ENCODE measurements at regions of chr22 and their contacts with region 1.

Region 1: GRCh38 chr22:30485362-30485988 is 13.7 kb upstream of the SEC14L3 start:
- DNase-seq: peak; percentile 44 to 92
- H3K4me3 ChIP-seq: no peak overlapping the region
- H3K27ac ChIP-seq: no peak overlapping the region
- H3K4me1 ChIP-seq: no peaks in the 10 kb centered on the region; a peak in 1 of 7 replicates
- H3K27me3 ChIP-seq: no peaks in the 10 kb centered on the region
- CTCF ChIP-seq: peak; percentile 93 to 95 (median 93)
- EP300 ChIP-seq: no peak
- POLR2A ChIP-seq: no peak
- RAD21 ChIP-seq: peak; percentile 85 to 89

Region 2: DNA sequence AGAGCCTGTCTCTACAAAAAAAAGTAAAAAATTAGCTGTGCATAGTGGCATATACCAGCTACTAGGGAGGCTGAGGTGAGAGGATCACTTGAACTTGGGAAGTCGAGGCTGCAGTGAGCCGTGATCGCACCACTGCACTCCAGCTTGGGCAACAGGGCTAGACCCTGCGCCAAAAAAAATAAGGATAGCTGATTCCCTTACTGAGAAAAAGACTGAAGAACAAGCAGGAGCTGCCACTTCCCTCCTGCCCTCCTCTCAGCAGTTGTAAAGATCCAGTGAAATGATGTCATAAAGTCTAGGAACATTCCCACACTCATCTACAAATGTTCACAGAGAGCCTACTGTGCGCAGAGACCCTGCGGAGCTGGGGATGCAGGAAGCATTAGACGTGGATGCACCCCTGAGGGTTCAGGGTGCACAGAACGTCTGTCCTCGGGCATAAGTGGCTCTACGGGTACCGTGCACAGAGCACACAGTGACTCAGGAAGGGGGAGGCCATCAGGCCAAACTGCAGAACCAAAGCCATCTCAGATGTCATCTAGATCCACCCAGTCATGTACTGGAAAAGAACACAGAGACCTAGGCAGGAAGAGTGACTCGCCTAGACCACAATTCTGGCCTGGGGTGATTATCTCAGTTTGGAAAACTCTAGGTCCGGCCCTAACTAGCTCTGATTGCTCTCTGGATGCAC is 76.9 kb before region 1 on chr22:
- CTCF ChIA-PET with region 1: no interaction called
- POLR2A ChIA-PET with region 1: no interaction called
- DNase-seq: no peak
- H3K4me3 ChIP-seq: no peak overlapping the region
- H3K27ac ChIP-seq: no peak overlapping the region
- H3K4me1 ChIP-seq: no peaks in the 10 kb centered on the region
- H3K27me3 ChIP-seq: no peaks in the 10 kb centered on the region
- CTCF ChIP-seq: no peak
- EP300 ChIP-seq: no peak
- POLR2A ChIP-seq: no peak
- RAD21 ChIP-seq: no peak

Region 3: DNA sequence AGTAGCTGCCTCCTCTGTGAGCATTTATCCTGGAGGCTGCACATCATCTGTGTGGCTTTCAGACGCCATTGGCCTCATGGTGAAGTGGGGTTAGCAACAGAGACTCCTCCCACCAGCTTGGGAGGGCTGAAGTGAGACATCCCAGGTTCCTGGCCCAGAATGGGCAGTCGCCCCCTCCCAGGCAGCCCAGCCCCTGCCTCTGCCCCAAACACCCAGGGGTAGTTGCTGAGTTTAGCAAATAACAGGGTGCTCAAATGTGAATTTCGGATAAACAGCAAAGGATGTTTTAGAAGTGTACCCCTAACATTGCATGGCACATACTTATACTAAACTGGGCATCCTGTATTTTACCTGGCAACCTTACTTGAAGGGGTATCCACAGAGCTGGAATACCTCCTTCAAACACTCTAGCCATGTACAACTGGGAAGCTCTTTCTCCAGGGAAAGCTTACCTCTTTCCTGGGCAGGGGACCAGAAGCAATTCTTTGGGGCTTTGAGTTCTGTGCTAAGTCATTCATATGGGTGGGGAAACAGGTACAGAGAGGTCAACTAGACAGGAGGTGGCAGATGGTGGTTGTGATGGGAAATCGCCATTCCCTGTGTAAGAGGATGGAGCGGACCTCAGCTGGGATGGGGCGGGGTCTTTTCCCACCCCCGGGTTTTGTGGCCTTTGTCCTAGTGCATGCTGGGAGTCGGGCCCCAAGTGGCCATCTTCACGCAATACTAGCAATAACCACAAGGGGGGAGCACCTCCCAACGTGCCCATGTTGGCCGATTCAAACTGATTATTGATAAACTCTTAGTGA is 40.6 kb before region 1 on chr22:
- CTCF ChIA-PET with region 1: interaction called, 69 read pairs
- POLR2A ChIA-PET with region 1: interaction called, 5 read pairs
- DNase-seq: peak; percentile 59 to 91
- H3K4me3 ChIP-seq: peak overlapping the region in 2 of 4 experiments; percentile 16 to 42; a peak in 4 of 8 replicates
- H3K27ac ChIP-seq: no peak overlapping the region
- H3K4me1 ChIP-seq: peaks cover 0 to 5% (median 5%) of the 10 kb centered on the region in 4 experiments; a peak in 6 of 7 replicates
- H3K27me3 ChIP-seq: no peaks in the 10 kb centered on the region
- CTCF ChIP-seq: peak; percentile 79 to 85 (median 82)
- EP300 ChIP-seq: no peak
- POLR2A ChIP-seq: no peak; a peak in 1 of 3 replicates
- RAD21 ChIP-seq: peak; percentile 83 to 87

Region 4: GRCh38 chr22:30459181-30460052 is 26.1 kb before region 1 on chr22:
- CTCF ChIA-PET with region 1: interaction called, 28 read pairs
- POLR2A ChIA-PET with region 1: interaction called, 3 read pairs
- DNase-seq: peak in 1 of 2 experiments; percentile 52
- H3K4me3 ChIP-seq: no peak overlapping the region
- H3K27ac ChIP-seq: no peak overlapping the region
- H3K4me1 ChIP-seq: no peaks in the 10 kb centered on the region
- H3K27me3 ChIP-seq: no peaks in the 10 kb centered on the region
- CTCF ChIP-seq: no peak
- EP300 ChIP-seq: no peak
- POLR2A ChIP-seq: no peak
- RAD21 ChIP-seq: no peak

Region 5: GRCh38 chr22:30469165-30469564 is 16.3 kb before region 1 on chr22:
- CTCF ChIA-PET with region 1: interaction called, 48 read pairs
- POLR2A ChIA-PET with region 1: interaction called, 5 read pairs
- DNase-seq: no peak
- H3K4me3 ChIP-seq: no peak overlapping the region
- H3K27ac ChIP-seq: no peak overlapping the region
- H3K4me1 ChIP-seq: no peaks in the 10 kb centered on the region; a peak in 1 of 7 replicates
- H3K27me3 ChIP-seq: peaks cover 0 to 2% (median 0%) of the 10 kb centered on the region in 4 experiments; a peak in 3 of 7 replicates
- CTCF ChIP-seq: no peak
- EP300 ChIP-seq: no peak
- POLR2A ChIP-seq: no peak
- RAD21 ChIP-seq: no peak

Region 6: GRCh38 chr22:30474683-30475424 is 10.6 kb before region 1 on chr22:
- CTCF ChIA-PET with region 1: interaction called, 48 read pairs
- POLR2A ChIA-PET with region 1: interaction called, 5 read pairs
- DNase-seq: no peak
- H3K4me3 ChIP-seq: no peak overlapping the region
- H3K27ac ChIP-seq: no peak overlapping the region
- H3K4me1 ChIP-seq: no peaks in the 10 kb centered on the region; a peak in 1 of 7 replicates
- H3K27me3 ChIP-seq: no peaks in the 10 kb centered on the region; a peak in 1 of 7 replicates
- CTCF ChIP-seq: no peak
- EP300 ChIP-seq: no peak
- POLR2A ChIP-seq: no peak
- RAD21 ChIP-seq: no peak

Region 7: GRCh38 chr22:30503551-30503950 is 18.1 kb after region 1 on chr22:
- CTCF ChIA-PET with region 1: interaction called, 11 read pairs
- POLR2A ChIA-PET with region 1: no interaction called
- DNase-seq: no peak
- H3K4me3 ChIP-seq: no peak overlapping the region
- H3K27ac ChIP-seq: no peak overlapping the region
- H3K4me1 ChIP-seq: peaks cover 0 to 4% (median 2%) of the 10 kb centered on the region in 4 experiments; a peak in 2 of 7 replicates
- H3K27me3 ChIP-seq: peaks cover 0 to 4% (median 0%) of the 10 kb centered on the region in 4 experiments; a peak in 2 of 7 replicates
- CTCF ChIP-seq: no peak
- EP300 ChIP-seq: no peak
- POLR2A ChIP-seq: no peak
- RAD21 ChIP-seq: no peak

Region 8: DNA sequence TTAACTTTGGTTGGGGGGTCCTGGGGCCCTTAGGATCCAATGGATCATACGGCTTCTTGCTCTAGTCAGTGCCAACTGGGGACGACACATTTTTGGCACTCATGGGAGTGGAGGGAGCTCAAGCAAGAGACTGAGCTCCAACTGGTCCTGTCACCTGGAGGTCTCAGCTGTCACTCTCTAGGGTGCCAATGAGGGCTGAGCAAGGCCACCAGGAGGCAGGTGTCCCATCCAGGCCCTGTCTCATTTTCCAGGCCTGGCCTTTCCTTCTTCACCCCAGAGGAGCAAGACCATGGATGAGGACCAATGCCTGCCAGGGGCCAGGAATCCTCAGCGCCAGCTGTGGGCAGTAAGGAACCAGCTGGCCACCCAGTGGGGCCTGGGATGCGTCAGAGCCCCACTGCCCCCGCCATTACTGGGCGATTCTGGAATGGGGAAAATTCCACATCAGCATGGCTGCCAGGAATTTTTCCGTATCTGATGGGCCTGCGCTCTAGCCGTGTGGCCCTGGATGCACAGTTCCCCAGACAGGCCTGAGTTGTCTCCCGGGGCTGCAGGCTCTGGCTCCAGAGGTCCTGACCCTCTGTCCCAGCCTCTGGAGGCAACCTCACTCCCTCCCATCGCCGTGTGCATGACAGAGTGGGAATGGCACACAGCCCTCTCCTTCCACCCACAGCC is 89.7 kb after region 1 on chr22:
- CTCF ChIA-PET with region 1: no interaction called
- POLR2A ChIA-PET with region 1: no interaction called
- DNase-seq: no peak
- H3K4me3 ChIP-seq: peak overlapping the region; percentile 40 to 70 (median 43); a peak in 7 of 8 replicates
- H3K27ac ChIP-seq: no peak overlapping the region
- H3K4me1 ChIP-seq: peaks cover 0 to 15% (median 5%) of the 10 kb centered on the region in 4 experiments; a peak in 5 of 7 replicates
- H3K27me3 ChIP-seq: no peaks in the 10 kb centered on the region
- CTCF ChIP-seq: peak in 1 of 3 experiments; percentile 39; a peak in 1 of 4 replicates
- EP300 ChIP-seq: no peak
- POLR2A ChIP-seq: 0 out of 3 replicates have a peak, but pooled peaks of 1 of the 2 experiments have one; percentile 2
- RAD21 ChIP-seq: no peak